ENCODE measurements at regions of chr3 and their contacts with region 1.

Region 1: DNA sequence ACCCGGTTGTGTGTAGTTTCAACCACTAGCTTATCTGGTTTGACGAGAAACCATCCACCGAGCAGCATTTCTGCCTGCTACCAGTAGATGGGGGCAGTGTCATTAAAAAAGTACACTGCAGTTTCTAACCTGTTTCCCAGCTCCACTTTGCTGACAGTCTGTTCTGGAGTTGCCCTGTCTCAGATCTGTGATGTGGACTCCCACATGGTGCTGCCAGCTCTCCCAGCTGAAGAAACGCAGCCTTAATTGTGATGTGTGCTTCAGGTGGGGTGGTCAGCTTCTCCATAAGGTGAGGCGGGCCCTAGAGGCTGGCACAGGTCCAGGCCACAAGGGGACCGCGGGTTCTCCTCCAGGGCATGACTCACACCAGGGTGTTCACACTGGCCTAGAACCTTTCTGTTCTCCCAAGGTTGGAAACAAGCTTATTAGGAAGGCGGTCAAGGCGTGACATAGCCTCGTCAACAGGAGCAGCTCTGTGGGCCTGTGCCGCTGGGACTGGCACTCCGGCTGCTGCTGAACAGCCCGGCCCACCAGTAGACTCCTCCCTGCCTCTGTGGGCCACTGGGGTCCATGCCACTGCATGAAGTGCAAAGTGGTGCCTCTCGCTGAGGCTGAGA is 2.9 kb upstream of the FAM43A start:
- DNase-seq: peak; percentile 61 to 85 (median 68)
- ATAC-seq: peak; percentile 78 to 90 (median 90)
- H3K4me3 ChIP-seq: no peak overlapping the region
- H3K27ac ChIP-seq: no peak overlapping the region
- H3K4me1 ChIP-seq: peaks cover 8 to 10% (median 10%) of the 10 kb centered on the region in 3 donors
- H3K27me3 ChIP-seq: peaks cover 0 to 17% (median 0%) of the 10 kb centered on the region in 4 donors
- CTCF ChIP-seq: peak; percentile 57 to 76 (median 70)

Region 2: DNA sequence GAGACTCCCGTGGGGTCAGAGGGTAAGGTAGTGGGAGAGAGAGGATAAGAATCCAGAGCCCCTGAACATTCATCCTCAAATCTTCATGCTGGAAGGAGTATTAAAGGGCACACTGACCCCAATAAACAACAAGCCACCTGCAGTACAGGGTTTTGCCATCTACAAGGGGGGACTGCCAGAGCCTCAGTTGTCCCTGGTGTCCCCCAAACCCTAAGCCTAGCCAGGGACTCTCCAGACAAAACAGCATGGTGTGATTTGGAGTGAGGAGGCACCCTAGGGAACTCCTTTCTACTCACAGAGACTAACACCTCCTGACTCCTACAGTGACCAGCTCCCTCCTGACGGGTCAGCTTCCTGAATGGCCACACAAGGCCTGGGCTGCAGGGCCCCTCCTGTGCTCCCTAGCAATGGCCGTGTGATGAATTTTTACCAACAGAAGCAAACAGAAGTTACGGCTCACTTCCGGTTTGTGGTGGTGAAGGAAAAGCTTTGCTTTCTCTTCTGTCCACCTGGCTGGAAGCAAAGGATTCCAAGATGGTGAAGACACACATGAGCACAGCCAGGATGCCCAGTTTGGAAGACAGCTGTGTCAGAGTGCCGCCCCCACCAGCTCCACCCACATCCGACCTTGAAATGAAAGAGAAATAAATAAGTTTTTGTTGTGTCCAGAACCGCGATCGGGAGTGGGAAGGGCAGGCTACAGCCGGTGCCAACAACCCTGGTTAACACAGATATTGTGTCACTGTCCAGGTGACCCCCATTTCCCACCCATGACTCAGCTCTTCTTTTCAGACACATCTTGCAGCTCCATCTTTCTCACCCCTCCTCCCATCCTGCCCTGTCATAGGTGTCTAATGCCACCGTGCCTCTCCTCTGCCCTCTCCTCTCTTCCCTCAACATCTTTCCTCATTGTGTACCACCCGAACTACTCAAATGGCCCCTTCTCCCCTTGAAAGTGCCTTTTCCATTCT is 126.4 kb before region 1 on chr3:
- intact Hi-C with region 1: no loop called
- DNase-seq: no peak
- ATAC-seq: peak in 3 of 4 donors; percentile 53 to 65 (median 56)
- H3K4me3 ChIP-seq: peak overlapping the region in 2 of 4 donors; percentile 14 to 22
- H3K27ac ChIP-seq: no peak overlapping the region
- H3K4me1 ChIP-seq: peaks cover 0 to 6% (median 0%) of the 10 kb centered on the region in 3 donors
- H3K27me3 ChIP-seq: no peaks in the 10 kb centered on the region
- CTCF ChIP-seq: no peak

Region 3: DNA sequence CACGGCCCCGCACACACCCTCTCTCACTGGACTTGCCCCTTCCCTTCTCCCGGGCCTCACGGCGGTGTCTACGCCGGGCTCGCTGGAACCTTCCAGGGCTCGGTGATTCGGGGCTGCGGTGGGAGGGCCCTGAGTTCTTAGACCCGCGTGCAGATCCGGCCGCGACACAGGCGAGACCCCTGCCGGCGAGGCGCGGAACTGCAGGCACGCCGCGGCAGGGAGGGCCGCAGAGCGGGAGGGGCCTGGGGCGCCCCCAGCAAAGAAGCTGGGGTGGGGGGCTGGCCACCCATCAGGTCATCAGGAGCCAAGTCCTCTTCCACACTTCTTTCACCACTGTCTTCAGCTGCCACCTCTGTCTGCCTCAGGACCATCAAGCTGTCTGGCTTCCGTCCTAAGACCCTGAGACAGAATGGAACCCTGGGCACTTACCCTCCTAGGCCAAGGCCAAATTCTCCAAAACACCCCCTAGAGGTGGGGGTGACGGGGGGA is 423.7 kb after region 1 on chr3:
- intact Hi-C with region 1: loop called in 2 of 3 experiments (anchors 2 to 5 kb)
- DNase-seq: peak; percentile 13 to 88 (median 56)
- ATAC-seq: peak; percentile 64 to 91 (median 88)
- H3K4me3 ChIP-seq: peak overlapping the region in 1 of 4 donors; percentile 28
- H3K27ac ChIP-seq: no peak overlapping the region
- H3K4me1 ChIP-seq: no peaks in the 10 kb centered on the region
- H3K27me3 ChIP-seq: no peaks in the 10 kb centered on the region
- CTCF ChIP-seq: peak; percentile 96 to 99 (median 99)

Region 4: DNA sequence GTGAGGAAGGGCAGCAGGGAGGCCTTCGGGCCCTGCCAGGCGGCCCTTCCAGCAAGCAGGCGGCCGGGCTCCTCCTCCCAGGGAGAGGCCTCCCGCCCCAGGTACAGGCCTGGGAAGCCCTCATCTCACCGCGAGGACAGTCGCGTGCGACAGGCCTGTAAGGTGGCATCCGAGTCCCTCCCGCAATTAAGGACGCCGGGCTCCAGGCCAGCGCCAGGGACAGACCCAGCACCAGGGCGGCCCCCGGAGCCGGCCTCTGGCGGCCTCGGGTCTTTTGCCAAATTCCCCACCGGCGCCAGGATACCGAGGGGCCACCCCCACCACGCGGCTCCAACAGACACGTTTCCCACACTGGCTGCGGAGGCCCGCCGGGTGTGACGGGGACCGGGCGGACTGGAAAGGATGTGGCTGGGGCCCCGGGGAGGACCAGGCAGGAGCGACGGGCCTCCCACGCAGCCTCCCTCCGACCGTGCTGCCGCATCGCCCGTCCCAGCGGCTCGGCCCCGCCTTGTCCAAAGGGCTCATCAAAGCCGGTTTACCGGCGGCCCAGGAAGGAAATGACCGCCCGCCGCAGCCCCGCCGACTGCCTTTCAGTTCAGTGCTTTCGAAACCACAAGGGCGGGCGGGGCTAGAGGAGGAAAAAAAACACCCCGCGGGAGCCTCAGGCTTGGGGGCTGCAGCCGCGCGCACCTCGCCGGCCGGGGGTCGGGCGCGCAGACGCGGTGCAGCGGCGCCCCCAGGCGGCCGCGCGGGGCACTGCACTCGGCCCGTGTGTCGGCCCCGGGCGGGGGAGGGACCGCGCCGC is 576.9 kb after region 1 on chr3:
- intact Hi-C with region 1: loop called in 2 of 3 experiments (anchors 5 kb)
- DNase-seq: peak; percentile 72 to 93 (median 79)
- ATAC-seq: peak; percentile 86 to 92 (median 91)
- H3K4me3 ChIP-seq: peak overlapping the region; percentile 49 to 68 (median 60)
- H3K27ac ChIP-seq: peak overlapping the region; percentile 19 to 82 (median 75)
- H3K4me1 ChIP-seq: peaks cover 0 to 3% (median 0%) of the 10 kb centered on the region in 3 donors
- H3K27me3 ChIP-seq: no peaks in the 10 kb centered on the region
- CTCF ChIP-seq: peak; percentile 27 to 75 (median 42)